Naive thymus-derived CD4-positive, alpha-beta T cell (primary cell): ENCODE measurements at regions of chrX and their contacts with region 1.

Region 1: DNA sequence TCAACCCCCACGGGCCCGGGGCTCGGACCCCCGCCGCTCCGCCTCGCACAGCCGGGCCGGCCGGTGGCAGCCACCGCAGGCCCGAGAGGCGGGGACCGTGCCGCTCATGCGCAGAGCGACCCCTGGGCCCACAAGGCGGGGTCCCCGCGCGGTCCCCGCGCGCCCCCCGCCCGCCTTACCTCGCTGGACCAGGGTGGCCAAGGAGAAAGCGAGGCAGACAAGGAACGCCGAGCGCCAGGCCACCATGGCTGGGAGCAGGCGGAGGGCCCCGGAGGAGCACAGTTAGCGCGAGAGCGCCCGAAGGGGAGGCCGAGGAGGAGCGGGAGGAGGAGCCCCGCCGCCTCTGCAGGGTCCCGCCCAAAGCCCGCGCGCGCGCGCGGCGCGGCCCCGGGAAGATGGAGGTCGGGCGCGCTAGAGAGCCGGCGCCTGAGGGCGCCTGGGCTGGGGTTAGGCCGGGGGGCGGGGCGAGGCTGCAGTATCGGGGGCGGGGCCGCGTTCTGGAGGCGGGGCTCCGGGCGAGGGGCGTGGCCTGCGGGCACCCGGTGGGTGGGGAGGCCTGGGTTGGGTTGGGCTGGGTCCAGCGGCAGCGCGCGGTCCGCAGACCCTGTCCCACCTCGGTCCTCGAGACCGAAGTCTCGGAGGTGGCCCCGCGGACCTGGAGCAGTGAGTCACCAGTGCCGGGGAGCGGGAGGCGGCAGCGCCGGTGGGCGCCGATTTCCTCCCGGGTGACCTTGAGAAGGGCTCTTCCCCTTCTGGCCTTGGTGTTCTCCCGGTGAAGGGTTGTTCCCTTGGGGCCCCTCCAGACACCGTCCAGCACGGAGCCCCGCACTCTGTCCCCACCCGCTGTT is at the start of gene CD99L2:
- DNase-seq: peak; percentile 79 to 92 (median 85)
- ATAC-seq: peak; percentile 98
- H3K4me3 ChIP-seq: peak within 1 kb of the TSS; percentile 71
- H3K4me3 Mint-ChIP-seq: peak within 1 kb of the TSS; percentile 76 to 96 (median 90)
- H3K27ac ChIP-seq: peak within 1 kb of the TSS; percentile 89
- H3K27ac Mint-ChIP-seq: peak within 1 kb of the TSS in 8 of 9 donors; percentile 31 to 90 (median 76)
- H3K4me1 ChIP-seq: peaks cover 0 to 4% of the 10 kb centered on the region in 2 donors
- H3K4me1 Mint-ChIP-seq: peaks cover 0 to 16% (median 6%) of the 10 kb centered on the region in 7 donors
- H3K27me3 ChIP-seq: no peaks in the 10 kb centered on the region
- H3K27me3 Mint-ChIP-seq: peaks cover 0 to 26% (median 0%) of the 10 kb centered on the region in 5 donors
- total RNA-seq, gene CD99L2: 14.3 to 20.4 (median 15.6) TPM

Region 2: DNA sequence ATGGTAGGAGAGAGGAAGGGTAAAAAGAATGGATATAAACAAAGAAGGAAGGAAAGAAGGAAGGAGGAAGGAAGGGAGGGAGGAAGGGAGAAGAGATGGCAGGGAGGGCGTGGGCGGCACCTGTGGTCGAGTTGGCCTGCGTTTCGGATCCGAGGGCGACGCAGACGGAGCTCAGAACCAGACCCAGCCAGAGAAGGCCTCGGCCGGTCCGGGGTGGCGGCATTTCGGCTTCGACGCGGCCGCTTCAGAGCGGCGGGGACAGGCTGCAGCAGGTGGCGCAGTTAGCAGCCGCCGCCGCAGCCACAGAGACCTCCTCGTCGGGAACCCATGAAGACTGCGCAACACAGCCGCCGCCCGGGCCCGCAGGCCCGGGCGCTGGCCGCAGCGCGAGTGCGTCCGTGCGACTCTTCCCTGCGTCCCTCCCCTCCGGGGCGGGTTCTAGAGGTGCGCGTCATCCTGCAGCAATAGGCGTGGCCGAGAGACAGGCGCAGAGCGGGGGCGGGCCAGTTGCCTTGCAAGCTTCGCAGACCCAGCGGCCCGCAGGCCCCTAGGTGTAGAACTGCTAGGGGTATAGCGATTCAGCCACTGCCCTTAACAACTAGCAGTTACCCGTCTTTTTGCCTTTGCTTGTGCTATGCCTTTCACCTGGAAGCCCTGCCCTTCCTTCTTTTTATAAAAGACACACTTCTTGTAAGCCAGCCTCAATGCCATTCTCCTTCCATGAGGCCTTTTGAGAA is 1393.5 kb before region 1 on chrX and contains the start of gene IDS:
- CTCF ChIA-PET with region 1: no interaction called
- POLR2A ChIA-PET with region 1: no interaction called
- intact Hi-C with region 1: loop called in 1 of 2 experiments (anchors 10 kb)
- DNase-seq: peak; percentile 68 to 88 (median 81)
- ATAC-seq: peak; percentile 85
- H3K4me3 ChIP-seq: peak within 1 kb of the TSS; percentile 72
- H3K4me3 Mint-ChIP-seq: peak within 1 kb of the TSS; percentile 86 to 100 (median 91)
- H3K27ac ChIP-seq: peak within 1 kb of the TSS; percentile 98
- H3K27ac Mint-ChIP-seq: peak within 1 kb of the TSS; percentile 87 to 98 (median 94)
- H3K4me1 ChIP-seq: peaks cover 6 to 13% of the 10 kb centered on the region in 2 donors
- H3K4me1 Mint-ChIP-seq: peaks cover 14 to 42% (median 23%) of the 10 kb centered on the region in 7 donors
- H3K27me3 ChIP-seq: no peaks in the 10 kb centered on the region
- H3K27me3 Mint-ChIP-seq: peaks cover 0 to 8% (median 0%) of the 10 kb centered on the region in 5 donors
- total RNA-seq, gene IDS: 73.1 to 317 (median 133) TPM

Region 3: GRCh38 chrX:150568320-150569154 is 330.0 kb before region 1 on chrX and contains the start of gene MTM1:
- CTCF ChIA-PET with region 1: no interaction called
- POLR2A ChIA-PET with region 1: no interaction called
- intact Hi-C with region 1: loop called in 1 of 2 experiments (anchors 1 kb)
- DNase-seq: peak; percentile 80 to 93 (median 90)
- ATAC-seq: peak; percentile 96
- H3K4me3 ChIP-seq: peak within 1 kb of the TSS; percentile 71
- H3K4me3 Mint-ChIP-seq: peak within 1 kb of the TSS; percentile 68 to 92 (median 90)
- H3K27ac ChIP-seq: peak within 1 kb of the TSS; percentile 75
- H3K27ac Mint-ChIP-seq: peak within 1 kb of the TSS; percentile 81 to 92 (median 89)
- H3K4me1 ChIP-seq: peaks cover 31 to 36% of the 10 kb centered on the region in 2 donors
- H3K4me1 Mint-ChIP-seq: peaks cover 6 to 45% (median 41%) of the 10 kb centered on the region in 7 donors
- H3K27me3 ChIP-seq: no peaks in the 10 kb centered on the region
- H3K27me3 Mint-ChIP-seq: no peaks in the 10 kb centered on the region
- total RNA-seq, gene MTM1: 21.8 to 34.7 (median 28.8) TPM

Region 4: GRCh38 chrX:150781677-150782076 is 116.9 kb before region 1 on chrX:
- CTCF ChIA-PET with region 1: no interaction called
- POLR2A ChIA-PET with region 1: no interaction called
- intact Hi-C with region 1: loop called in 1 of 2 experiments (anchors 10 kb)
- DNase-seq: no peak
- ATAC-seq: no peak
- H3K4me3 ChIP-seq: no peak overlapping the region
- H3K4me3 Mint-ChIP-seq: no peak overlapping the region
- H3K27ac ChIP-seq: no peak overlapping the region
- H3K27ac Mint-ChIP-seq: no peak overlapping the region
- H3K4me1 ChIP-seq: no peaks in the 10 kb centered on the region
- H3K4me1 Mint-ChIP-seq: peaks cover 0 to 3% (median 0%) of the 10 kb centered on the region in 7 donors
- H3K27me3 ChIP-seq: no peaks in the 10 kb centered on the region
- H3K27me3 Mint-ChIP-seq: no peaks in the 10 kb centered on the region

Region 5: GRCh38 chrX:150942998-150943585 is 44.5 kb after region 1 on chrX:
- CTCF ChIA-PET with region 1: no interaction called
- POLR2A ChIA-PET with region 1: no interaction called
- intact Hi-C with region 1: no loop called
- DNase-seq: no peak
- ATAC-seq: no peak
- H3K4me3 ChIP-seq: no peak overlapping the region
- H3K4me3 Mint-ChIP-seq: no peak overlapping the region
- H3K27ac ChIP-seq: no peak overlapping the region
- H3K27ac Mint-ChIP-seq: no peak overlapping the region
- H3K4me1 ChIP-seq: no peaks in the 10 kb centered on the region
- H3K4me1 Mint-ChIP-seq: no peaks in the 10 kb centered on the region
- H3K27me3 ChIP-seq: no peaks in the 10 kb centered on the region
- H3K27me3 Mint-ChIP-seq: peaks cover 0 to 6% (median 0%) of the 10 kb centered on the region in 5 donors

Region 6: GRCh38 chrX:150982788-150983520 is 84.4 kb after region 1 on chrX and contains the start of gene HMGB3:
- CTCF ChIA-PET with region 1: no interaction called
- POLR2A ChIA-PET with region 1: no interaction called
- intact Hi-C with region 1: loop called (anchors 1 kb)
- DNase-seq: peak; percentile 45 to 80 (median 59)
- ATAC-seq: peak; percentile 98
- H3K4me3 ChIP-seq: peak within 1 kb of the TSS; percentile 48
- H3K4me3 Mint-ChIP-seq: peak within 1 kb of the TSS; percentile 66 to 84 (median 73)
- H3K27ac ChIP-seq: no peak within 1 kb of the TSS
- H3K27ac Mint-ChIP-seq: peak within 1 kb of the TSS in 2 of 9 donors; percentile 29 to 59
- H3K4me1 ChIP-seq: no peaks in the 10 kb centered on the region
- H3K4me1 Mint-ChIP-seq: peaks cover 0 to 16% (median 6%) of the 10 kb centered on the region in 7 donors
- H3K27me3 ChIP-seq: no peaks in the 10 kb centered on the region
- H3K27me3 Mint-ChIP-seq: peaks cover 0 to 18% (median 7%) of the 10 kb centered on the region in 5 donors
- total RNA-seq, gene HMGB3: 0.51 to 23.5 (median 2.6) TPM

Region 7: GRCh38 chrX:151396825-151397740 is 498.5 kb after region 1 on chrX and contains the start of gene VMA21:
- CTCF ChIA-PET with region 1: no interaction called
- POLR2A ChIA-PET with region 1: interaction called, 3 read pairs
- intact Hi-C with region 1: loop called in 1 of 2 experiments (anchors 1 kb)
- DNase-seq: peak; percentile 70 to 83 (median 80)
- ATAC-seq: peak; percentile 88
- H3K4me3 ChIP-seq: peak within 1 kb of the TSS; percentile 82
- H3K4me3 Mint-ChIP-seq: peak within 1 kb of the TSS; percentile 77 to 91 (median 88)
- H3K27ac ChIP-seq: peak within 1 kb of the TSS; percentile 92
- H3K27ac Mint-ChIP-seq: peak within 1 kb of the TSS; percentile 95 to 99 (median 96)
- H3K4me1 ChIP-seq: peaks cover 17 to 21% of the 10 kb centered on the region in 2 donors
- H3K4me1 Mint-ChIP-seq: peaks cover 25 to 75% (median 71%) of the 10 kb centered on the region in 7 donors
- H3K27me3 ChIP-seq: no peaks in the 10 kb centered on the region
- H3K27me3 Mint-ChIP-seq: no peaks in the 10 kb centered on the region
- total RNA-seq, gene VMA21: 19.3 to 41.0 (median 29.3) TPM